Heart right ventricle (tissue), 16 donors: ENCODE measurements at regions of chr1 and their contacts with region 1.

Region 1: DNA sequence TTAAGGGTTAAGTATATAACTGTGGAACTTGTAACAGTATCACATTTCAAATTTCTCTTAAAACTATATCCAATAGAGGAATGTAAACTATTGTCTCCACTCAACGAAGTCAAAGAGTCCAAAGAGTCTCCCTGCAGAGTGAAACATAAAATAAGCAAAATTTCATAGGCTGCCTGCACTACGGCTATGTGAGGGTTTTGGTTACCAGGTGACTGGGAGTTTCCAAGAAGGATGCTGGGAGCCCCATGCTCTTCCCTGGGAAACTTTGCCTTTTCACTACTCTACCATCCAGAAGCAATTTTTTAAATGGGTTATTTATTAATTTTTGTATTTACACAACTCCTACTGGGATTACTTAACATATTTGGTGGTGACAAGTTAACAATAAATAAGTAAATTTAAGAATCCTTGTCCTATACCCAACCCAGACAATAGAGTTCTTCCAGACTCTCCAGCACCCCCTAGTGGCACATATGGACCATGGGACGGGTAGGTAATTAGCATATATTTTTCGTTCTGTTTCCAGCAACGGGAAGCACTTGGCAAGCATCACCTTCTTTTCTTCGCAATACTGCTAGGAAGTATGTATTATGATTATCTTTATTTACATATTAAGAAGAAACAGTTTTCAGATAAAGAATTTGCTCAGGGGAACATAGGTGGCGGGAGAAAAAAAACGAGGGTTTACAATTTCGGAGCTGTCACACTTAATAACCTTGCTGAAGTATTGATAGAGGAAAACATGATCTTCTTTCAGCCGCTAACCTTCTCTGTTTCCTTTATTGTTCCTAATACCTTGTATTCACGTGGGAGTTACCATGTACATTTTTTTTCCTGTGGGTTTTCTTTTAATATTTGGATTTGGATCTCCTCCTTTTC is 3.5 kb downstream of the FMO2 start:
- DNase-seq: peak in 1 of 2 donors; percentile 78
- ATAC-seq: peak; percentile 60 to 88 (median 77)
- H3K4me3 ChIP-seq: peak overlapping the region; percentile 14 to 60 (median 50)
- H3K27ac ChIP-seq: peak overlapping the region; percentile 47 to 88 (median 74)
- H3K4me1 ChIP-seq: peaks cover 0 to 63% (median 33%) of the 10 kb centered on the region in 9 donors
- H3K27me3 ChIP-seq: no peaks in the 10 kb centered on the region
- CTCF ChIP-seq: peak; percentile 82 to 92 (median 88)

Region 2: GRCh38 chr1:169802888-169803287 is 1385.7 kb before region 1 on chr1:
- intact Hi-C with region 1: no loop called
- DNase-seq: no peak
- ATAC-seq: no peak
- H3K4me3 ChIP-seq: no peak overlapping the region
- H3K27ac ChIP-seq: no peak overlapping the region
- H3K4me1 ChIP-seq: peaks cover 0 to 5% (median 0%) of the 10 kb centered on the region in 9 donors
- H3K27me3 ChIP-seq: no peaks in the 10 kb centered on the region
- CTCF ChIP-seq: no peak

Region 3: DNA sequence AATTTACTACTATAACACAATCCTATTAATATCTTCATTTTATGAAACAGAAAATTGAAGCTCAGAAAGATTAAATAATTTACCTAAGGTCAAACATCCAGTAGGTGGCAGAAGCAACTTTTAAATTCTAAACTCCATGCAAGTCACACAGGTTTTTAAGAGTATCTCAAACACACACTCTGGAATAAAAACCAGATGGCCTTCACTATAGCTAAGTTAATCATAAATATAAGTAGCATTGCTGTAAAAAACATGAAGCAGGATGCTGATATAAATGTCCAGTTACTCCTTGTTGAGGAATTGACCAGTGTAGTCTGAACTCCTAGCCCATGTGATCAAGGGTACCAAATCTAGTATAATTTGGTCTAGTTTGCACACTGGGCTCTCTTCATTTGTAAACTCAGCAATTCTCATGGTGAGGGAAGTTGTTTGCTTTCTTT is 107.3 kb before region 1 on chr1:
- intact Hi-C with region 1: loop called in 8 of 10 experiments (anchors 2 to 10 kb)
- DNase-seq: no peak
- ATAC-seq: peak in 7 of 8 donors; percentile 38 to 65 (median 56)
- H3K4me3 ChIP-seq: no peak overlapping the region
- H3K27ac ChIP-seq: peak overlapping the region in 8 of 10 donors; percentile 9 to 71 (median 48)
- H3K4me1 ChIP-seq: peaks cover 0 to 42% (median 10%) of the 10 kb centered on the region in 9 donors
- H3K27me3 ChIP-seq: no peaks in the 10 kb centered on the region
- CTCF ChIP-seq: peak; percentile 27 to 74 (median 59)

Region 4: DNA sequence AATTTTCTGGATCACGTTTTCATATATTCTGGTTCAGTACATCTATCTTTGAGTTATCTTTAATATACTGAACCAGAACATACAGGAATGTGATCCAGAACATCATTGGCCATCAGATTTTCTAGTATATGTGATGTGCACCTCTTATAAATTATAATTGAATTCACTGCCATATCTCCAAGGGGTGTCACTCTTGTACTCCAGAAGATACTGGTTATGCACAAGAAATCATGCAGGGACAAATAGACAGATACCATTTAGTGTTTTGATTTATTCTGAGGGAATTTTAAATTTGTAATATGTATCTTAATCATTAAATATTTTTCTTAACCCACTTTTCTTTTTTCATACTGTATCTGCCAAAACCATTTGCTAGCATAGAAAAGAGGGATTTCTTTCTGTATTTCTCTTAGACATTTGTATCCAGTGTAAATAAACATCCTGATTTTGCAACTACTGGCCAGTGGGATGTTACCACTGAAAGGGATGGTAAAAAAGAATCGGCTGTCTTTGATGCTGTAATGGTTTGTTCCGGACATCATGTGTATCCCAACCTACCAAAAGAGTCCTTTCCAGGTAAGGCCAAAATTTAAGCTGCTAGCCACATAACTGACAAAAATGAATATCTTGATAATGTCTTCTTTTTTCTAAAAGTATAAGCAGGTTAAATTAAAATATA is 81.2 kb before region 1 on chr1:
- intact Hi-C with region 1: loop called in 3 of 10 experiments (anchors 1 to 5 kb)
- DNase-seq: no peak
- ATAC-seq: peak in 4 of 8 donors; percentile 53 to 68 (median 62)
- H3K4me3 ChIP-seq: no peak overlapping the region
- H3K27ac ChIP-seq: peak overlapping the region in 4 of 10 donors; percentile 18 to 45 (median 32)
- H3K4me1 ChIP-seq: peaks cover 0 to 48% (median 5%) of the 10 kb centered on the region in 9 donors
- H3K27me3 ChIP-seq: no peaks in the 10 kb centered on the region
- CTCF ChIP-seq: peak in 5 of 9 donors; percentile 40 to 55 (median 44)

Region 5: GRCh38 chr1:171141688-171142415 is 46.8 kb before region 1 on chr1:
- intact Hi-C with region 1: loop called in 6 of 10 experiments (anchors 1 to 5 kb)
- DNase-seq: peak; percentile 29 to 71
- ATAC-seq: peak; percentile 78 to 93 (median 86)
- H3K4me3 ChIP-seq: peak overlapping the region in 4 of 10 donors; percentile 13 to 24 (median 16)
- H3K27ac ChIP-seq: peak overlapping the region; percentile 72 to 95 (median 86)
- H3K4me1 ChIP-seq: peaks cover 11 to 91% (median 53%) of the 10 kb centered on the region in 9 donors
- H3K27me3 ChIP-seq: no peaks in the 10 kb centered on the region
- CTCF ChIP-seq: peak in 5 of 9 donors; percentile 21 to 59 (median 44)

Region 6: GRCh38 chr1:171210355-171210754 is 21.7 kb after region 1 on chr1:
- intact Hi-C with region 1: loop called in 1 of 10 experiments (anchors 2 kb)
- DNase-seq: no peak
- ATAC-seq: peak; percentile 68 to 90 (median 82)
- H3K4me3 ChIP-seq: no peak overlapping the region
- H3K27ac ChIP-seq: peak overlapping the region in 6 of 10 donors; percentile 32 to 57 (median 44)
- H3K4me1 ChIP-seq: peaks cover 0 to 52% (median 23%) of the 10 kb centered on the region in 9 donors
- H3K27me3 ChIP-seq: no peaks in the 10 kb centered on the region
- CTCF ChIP-seq: no peak

Region 7: DNA sequence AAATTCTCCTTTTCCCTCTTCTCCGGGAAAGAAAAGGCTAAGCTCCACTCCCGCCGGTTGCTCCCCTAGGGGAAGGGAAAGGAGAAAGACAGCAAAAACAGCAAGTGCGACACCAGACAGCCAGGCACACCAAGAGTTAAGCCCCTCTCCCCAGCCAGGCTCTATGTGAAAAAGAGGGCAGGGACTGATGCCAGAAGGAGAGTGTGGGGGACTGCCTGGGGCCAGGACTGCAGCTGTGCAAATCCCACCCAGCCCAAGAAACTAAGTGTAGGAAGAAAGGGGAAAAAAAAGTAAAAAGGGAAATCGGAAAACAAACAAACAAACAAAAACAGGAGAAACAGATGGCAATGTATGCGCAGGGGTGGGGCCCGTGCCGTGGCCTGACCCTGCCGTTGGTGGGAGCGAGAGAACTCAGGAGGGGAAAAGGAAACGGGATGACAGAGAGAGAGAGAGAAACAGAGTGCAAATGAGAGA is 32.0 kb after region 1 on chr1:
- intact Hi-C with region 1: loop called in 3 of 10 experiments (anchors 5 kb)
- DNase-seq: no peak
- ATAC-seq: peak in 7 of 8 donors; percentile 38 to 67 (median 48)
- H3K4me3 ChIP-seq: peak overlapping the region in 3 of 10 donors; percentile 10 to 25 (median 16)
- H3K27ac ChIP-seq: peak overlapping the region; percentile 22 to 85 (median 66)
- H3K4me1 ChIP-seq: peaks cover 0 to 56% (median 26%) of the 10 kb centered on the region in 9 donors
- H3K27me3 ChIP-seq: no peaks in the 10 kb centered on the region
- CTCF ChIP-seq: no peak

Region 8: DNA sequence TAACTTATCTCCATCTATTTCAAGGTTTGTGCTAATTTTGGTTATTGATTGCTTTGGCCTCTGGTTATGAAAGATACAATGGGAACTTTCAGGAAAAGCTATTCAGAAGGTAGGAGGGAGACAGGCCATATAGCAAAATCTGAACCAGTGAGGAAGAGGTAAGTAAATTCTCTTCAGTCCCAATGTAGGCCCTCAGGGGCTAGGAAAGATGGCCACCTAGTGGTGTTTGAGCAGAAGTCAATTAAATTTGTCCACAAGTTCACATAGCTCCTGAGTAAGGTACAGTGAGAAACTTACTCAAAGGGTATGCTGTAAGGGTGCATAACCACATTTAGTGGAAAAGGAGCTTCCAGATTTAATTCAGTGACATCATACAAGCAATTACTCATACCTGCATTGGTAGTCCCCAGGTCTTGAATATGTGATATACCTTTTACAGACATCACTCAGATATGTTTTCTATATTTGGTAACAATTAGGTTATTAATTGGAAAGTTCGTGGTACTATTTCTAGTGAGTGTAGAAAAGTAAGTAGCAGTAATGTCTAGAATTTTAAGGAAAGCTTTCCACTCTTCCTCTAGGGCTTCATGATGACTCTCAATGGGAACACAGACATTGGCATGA is 38.2 kb after region 1 on chr1:
- intact Hi-C with region 1: loop called in 4 of 10 experiments (anchors 2 to 5 kb)
- DNase-seq: peak in 1 of 2 donors; percentile 46
- ATAC-seq: peak in 7 of 8 donors; percentile 68 to 87 (median 79)
- H3K4me3 ChIP-seq: no peak overlapping the region
- H3K27ac ChIP-seq: no peak overlapping the region
- H3K4me1 ChIP-seq: peaks cover 0 to 28% (median 11%) of the 10 kb centered on the region in 9 donors
- H3K27me3 ChIP-seq: no peaks in the 10 kb centered on the region
- CTCF ChIP-seq: peak; percentile 66 to 89 (median 84)

Region 9: GRCh38 chr1:171344473-171344820 is 155.8 kb after region 1 on chr1:
- intact Hi-C with region 1: no loop called
- DNase-seq: no peak
- ATAC-seq: peak in 1 of 8 donors; percentile 53
- H3K4me3 ChIP-seq: no peak overlapping the region
- H3K27ac ChIP-seq: no peak overlapping the region
- H3K4me1 ChIP-seq: peaks cover 0 to 7% (median 0%) of the 10 kb centered on the region in 9 donors
- H3K27me3 ChIP-seq: no peaks in the 10 kb centered on the region
- CTCF ChIP-seq: no peak